Endothelial cell of umbilical vein (primary cell): ENCODE measurements at regions of chr6 and their contacts with region 1.

Region 1: DNA sequence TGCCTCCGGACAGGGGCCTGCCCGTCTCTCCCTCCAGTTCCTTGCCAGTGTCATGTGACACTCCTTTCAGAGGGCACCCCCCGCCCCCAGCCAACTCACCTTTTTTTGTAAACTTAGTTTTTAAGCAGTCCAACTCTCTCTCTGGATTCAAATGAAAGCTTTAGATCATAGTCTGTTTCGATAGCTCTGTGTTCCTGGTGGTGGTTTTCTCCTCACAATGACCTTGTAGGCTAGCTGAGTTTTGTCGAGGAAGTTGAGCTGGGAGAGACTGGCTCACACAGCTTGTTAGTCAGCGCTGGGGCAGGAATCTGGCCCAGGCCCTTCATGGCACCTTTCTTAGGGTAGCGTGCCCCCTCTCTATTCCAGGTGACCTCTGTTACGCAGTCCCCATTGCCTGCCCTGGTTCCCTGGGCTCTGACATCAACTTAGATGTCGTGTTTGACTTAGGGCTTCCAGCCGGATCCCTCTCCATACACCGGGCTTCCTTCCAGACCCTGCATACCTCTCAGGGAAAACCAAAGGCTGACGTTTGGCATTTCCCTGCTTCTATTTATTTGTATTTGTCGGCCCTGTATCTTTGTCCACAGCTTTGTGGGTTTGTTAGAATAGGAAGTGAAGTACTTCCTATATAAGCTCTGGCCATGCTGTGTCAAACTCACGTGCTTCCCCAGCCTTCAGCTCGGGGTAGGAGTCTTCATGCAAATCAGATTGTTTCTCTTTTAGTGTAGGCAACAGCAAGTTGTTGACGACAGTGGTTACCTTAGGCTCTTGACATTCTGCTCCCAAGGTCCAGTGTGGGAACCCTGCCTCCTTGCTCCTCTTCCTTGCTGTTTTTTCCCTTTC is 12.7 kb downstream of the IGF2R start:
- DNase-seq: peak; percentile 97
- H3K4me3 ChIP-seq: no peak overlapping the region
- H3K27ac ChIP-seq: peak overlapping the region; percentile 40
- H3K4me1 ChIP-seq: peaks cover 30% of the 10 kb centered on the region
- H3K27me3 ChIP-seq: peaks cover 14 to 17% of the 10 kb centered on the region in 2 experiments
- CTCF ChIP-seq: no peak
- POLR2A ChIP-seq: no peak

Region 2: GRCh38 chr6:159726918-159727716 is 254.5 kb before region 1 on chr6 and contains the start of gene WTAP:
- CTCF ChIA-PET with region 1: no interaction called
- POLR2A ChIA-PET with region 1: no interaction called
- dilution Hi-C with region 1: no loop called
- intact Hi-C with region 1: loop called (anchors 1 kb)
- DNase-seq: peak; percentile 95
- H3K4me3 ChIP-seq: peak within 1 kb of the TSS; percentile 83 to 100 (median 89)
- H3K27ac ChIP-seq: peak within 1 kb of the TSS; percentile 93
- H3K4me1 ChIP-seq: peaks cover 21% of the 10 kb centered on the region
- H3K27me3 ChIP-seq: no peaks in the 10 kb centered on the region
- CTCF ChIP-seq: no peak
- POLR2A ChIP-seq: peak; percentile 58
- total RNA-seq, gene WTAP: 75.6 and 81.6 TPM in 2 replicates

Region 3: DNA sequence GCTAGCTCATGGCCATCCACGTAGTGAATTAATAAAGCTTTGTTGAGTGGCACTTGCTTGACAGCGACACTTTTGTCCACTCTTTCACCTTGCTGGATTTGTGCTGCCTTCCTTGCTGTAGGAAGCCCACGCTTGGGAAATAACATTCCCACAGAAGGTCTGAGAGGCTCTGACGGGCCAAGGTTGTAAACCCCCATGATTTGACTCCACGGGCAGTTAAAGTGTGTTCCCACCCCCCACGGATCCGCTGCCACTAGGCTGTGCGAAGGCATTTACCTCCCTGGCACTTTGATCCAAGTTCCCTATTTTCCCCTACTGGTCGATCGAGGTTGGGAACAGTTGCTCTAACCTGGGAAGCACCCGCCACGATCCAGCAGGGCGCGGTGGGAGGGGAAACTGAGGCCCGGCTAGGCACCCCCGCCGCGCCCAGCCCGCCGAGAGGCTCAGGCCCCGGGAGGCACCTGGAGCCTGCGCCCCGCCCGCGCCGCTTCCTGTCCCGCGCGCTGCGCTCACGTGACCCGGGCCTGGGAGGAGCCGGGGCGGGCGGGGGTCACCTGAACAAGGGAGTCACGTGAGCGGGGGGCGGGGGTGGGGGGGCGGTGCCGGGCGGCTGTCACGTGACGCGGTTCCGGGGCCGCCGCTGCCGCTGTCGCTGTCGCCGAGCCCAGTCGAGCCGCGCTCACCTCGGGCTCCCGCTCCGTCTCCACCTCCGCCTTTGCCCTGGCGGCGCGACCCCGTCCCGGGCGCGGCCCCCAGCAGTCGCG is 13.0 kb before region 1 on chr6 and contains the start of gene IGF2R:
- CTCF ChIA-PET with region 1: interaction called, 7 read pairs
- POLR2A ChIA-PET with region 1: no interaction called
- dilution Hi-C with region 1: no loop called
- intact Hi-C with region 1: loop called (anchors 1 kb)
- DNase-seq: peak; percentile 69
- H3K4me3 ChIP-seq: peak within 1 kb of the TSS; percentile 71 to 93 (median 79)
- H3K27ac ChIP-seq: peak within 1 kb of the TSS; percentile 58
- H3K4me1 ChIP-seq: peaks cover 8% of the 10 kb centered on the region
- H3K27me3 ChIP-seq: peaks cover 6 to 14% of the 10 kb centered on the region in 2 experiments
- CTCF ChIP-seq: peak in 1 of 2 donors; percentile 23
- POLR2A ChIP-seq: peak; percentile 67
- total RNA-seq, gene IGF2R: 59.7 and 60.2 TPM in 2 replicates

Region 4: DNA sequence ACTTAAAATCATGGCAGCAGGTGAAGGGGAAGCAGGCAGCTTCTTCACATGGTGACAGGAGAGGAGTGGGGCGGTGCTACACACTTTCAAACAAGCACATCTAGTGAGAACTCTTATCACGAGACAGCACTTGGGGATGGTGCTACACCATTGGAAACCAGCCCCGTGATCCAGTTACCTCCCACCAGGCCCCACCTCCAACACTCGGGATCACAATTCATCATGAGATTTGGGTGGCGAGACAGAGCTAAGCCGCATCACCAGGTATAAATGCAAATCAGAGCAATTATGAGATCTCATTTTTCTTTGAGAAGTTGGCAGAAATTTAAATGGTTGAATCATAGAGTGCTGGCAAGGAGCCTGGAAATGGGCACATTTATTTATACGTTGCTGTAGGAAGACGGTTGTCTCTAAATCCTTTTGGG is 18.7 kb after region 1 on chr6:
- CTCF ChIA-PET with region 1: no interaction called
- POLR2A ChIA-PET with region 1: no interaction called
- dilution Hi-C with region 1: no loop called
- intact Hi-C with region 1: no loop called
- DNase-seq: no peak
- H3K4me3 ChIP-seq: no peak overlapping the region
- H3K27ac ChIP-seq: no peak overlapping the region
- H3K4me1 ChIP-seq: no peaks in the 10 kb centered on the region
- H3K27me3 ChIP-seq: no peaks in the 10 kb centered on the region
- CTCF ChIP-seq: no peak
- POLR2A ChIP-seq: no peak

Region 5: DNA sequence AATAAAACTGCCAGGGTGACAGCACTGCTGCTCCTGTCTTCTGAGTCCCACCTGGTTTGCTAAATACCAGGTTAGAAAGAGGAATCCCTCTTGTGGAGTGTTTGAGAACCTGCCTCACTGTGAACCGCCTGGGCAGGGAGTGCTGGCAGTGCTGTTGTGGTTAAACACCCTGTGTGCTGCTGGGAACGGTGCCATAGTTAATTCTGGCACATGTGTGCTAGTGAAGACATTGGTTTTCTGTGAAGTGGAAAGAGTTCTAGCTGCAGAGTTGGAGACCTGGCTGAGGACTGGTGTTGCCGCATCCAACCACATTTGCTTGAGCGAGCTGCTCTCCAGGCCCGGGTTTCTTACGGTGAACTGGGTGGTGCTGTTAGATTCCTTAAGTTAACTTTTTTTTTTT is 60.0 kb after region 1 on chr6:
- CTCF ChIA-PET with region 1: interaction called, 3 read pairs
- POLR2A ChIA-PET with region 1: no interaction called
- dilution Hi-C with region 1: no loop called
- intact Hi-C with region 1: loop called (anchors 5 kb)
- DNase-seq: no peak
- H3K4me3 ChIP-seq: no peak overlapping the region
- H3K27ac ChIP-seq: no peak overlapping the region
- H3K4me1 ChIP-seq: no peaks in the 10 kb centered on the region
- H3K27me3 ChIP-seq: no peaks in the 10 kb centered on the region
- CTCF ChIP-seq: no peak
- POLR2A ChIP-seq: no peak